Activated B cell treated with CpG ODN at 0.5 μM for 24 hours (primary cell): ENCODE measurements at regions of chr3 and their contacts with region 1.

Region 1: GRCh38 chr3:27392950-27393679 is 23.9 kb upstream of the NEK10 start:
- DNase-seq: no peak
- ATAC-seq: no peak
- H3K4me3 Mint-ChIP-seq: no peak overlapping the region
- H3K27ac Mint-ChIP-seq: peak overlapping the region; percentile 53
- H3K4me1 Mint-ChIP-seq: peaks cover 7% of the 10 kb centered on the region
- H3K27me3 Mint-ChIP-seq: no peaks in the 10 kb centered on the region
- CTCF ChIP-seq: no peak

Region 2: DNA sequence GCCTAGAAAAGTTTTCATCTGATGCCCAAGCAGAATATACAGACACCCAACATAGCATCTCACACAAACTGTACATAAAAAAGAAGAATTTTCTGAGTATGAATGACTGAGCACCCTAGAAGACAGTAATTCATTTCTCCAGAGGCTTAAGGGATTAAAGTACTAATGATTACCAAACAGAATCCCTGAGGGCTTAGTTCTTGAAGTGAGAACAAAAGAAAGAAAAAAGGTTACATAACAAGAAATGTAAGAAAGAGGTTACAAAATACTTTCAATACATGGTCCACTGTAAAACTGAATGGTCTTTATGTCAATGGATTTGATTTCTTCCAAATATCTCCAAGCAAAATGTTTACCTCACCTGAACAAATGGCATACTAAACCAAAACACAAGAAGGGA is 14.8 kb before region 1 on chr3:
- CTCF ChIA-PET with region 1: no interaction called
- POLR2A ChIA-PET with region 1: no interaction called
- intact Hi-C with region 1: loop called (anchors 2 kb)
- DNase-seq: no peak
- ATAC-seq: no peak
- H3K4me3 Mint-ChIP-seq: no peak overlapping the region
- H3K27ac Mint-ChIP-seq: no peak overlapping the region
- H3K4me1 Mint-ChIP-seq: no peaks in the 10 kb centered on the region
- H3K27me3 Mint-ChIP-seq: no peaks in the 10 kb centered on the region
- CTCF ChIP-seq: no peak